ENCODE measurements at regions of chr1 and their contacts with region 1.

Region 1: GRCh38 chr1:241531195-241532161 is 700 bp upstream of the KMO start:
- DNase-seq: no peak
- H3K4me3 Mint-ChIP-seq: peak overlapping the region; percentile 85
- H3K27ac Mint-ChIP-seq: peak overlapping the region; percentile 92
- H3K4me1 Mint-ChIP-seq: peaks cover 15% of the 10 kb centered on the region
- H3K27me3 Mint-ChIP-seq: no peaks in the 10 kb centered on the region

Region 2: DNA sequence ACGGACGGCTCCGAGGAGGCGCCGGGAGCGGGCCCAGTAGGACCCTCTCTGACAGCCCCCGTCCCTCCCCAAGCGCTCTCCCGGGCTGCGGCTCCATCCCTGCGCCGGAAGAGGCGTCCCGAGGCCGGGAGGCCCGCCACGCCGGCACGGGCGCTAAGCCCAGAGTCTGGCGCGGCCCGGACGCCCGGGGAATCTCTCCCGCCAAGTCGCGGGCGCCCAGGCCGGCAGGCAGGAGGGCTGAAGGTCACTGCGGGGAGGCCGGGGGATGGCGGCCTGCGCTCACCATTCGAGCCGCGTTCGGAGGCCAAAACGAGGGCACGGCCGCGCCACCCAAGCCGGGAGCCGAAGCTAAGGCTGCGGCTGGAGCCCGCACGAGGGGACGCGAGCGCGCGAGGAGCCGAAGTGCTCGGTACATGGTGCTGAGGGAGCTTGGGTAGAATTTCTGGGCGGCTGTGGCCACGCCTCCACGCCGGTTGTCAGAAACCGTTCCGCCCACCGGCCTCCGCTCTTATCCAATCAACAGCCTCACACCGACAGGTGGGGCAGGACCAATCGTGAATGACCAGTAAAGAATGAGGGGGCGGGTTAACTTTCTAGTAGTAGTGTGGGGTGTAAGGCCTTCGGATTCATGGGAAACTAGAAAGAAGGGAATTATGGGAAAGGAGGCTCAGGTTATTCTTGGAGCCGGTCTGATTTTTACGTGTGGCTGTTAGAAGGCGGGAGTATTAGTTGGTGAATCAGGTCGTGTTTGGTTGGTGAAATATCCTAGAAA is 12.0 kb before region 1 on chr1 and contains the start of gene FH:
- CTCF ChIA-PET with region 1: no interaction called
- intact Hi-C with region 1: loop called (anchors 1 kb)
- DNase-seq: peak; percentile 97
- H3K4me3 Mint-ChIP-seq: peak within 1 kb of the TSS; percentile 89
- H3K27ac Mint-ChIP-seq: peak within 1 kb of the TSS; percentile 77
- H3K4me1 Mint-ChIP-seq: peaks cover 11% of the 10 kb centered on the region
- H3K27me3 Mint-ChIP-seq: peaks cover 11% of the 10 kb centered on the region
- total RNA-seq, gene FH: 91.6 to 95.4 TPM

Region 3: GRCh38 chr1:241592273-241592958 is 60.9 kb after region 1 on chr1:
- CTCF ChIA-PET with region 1: no interaction called
- intact Hi-C with region 1: loop called (anchors 1 kb)
- DNase-seq: peak; percentile 7
- H3K4me3 Mint-ChIP-seq: no peak overlapping the region
- H3K27ac Mint-ChIP-seq: peak overlapping the region; percentile 79
- H3K4me1 Mint-ChIP-seq: peaks cover 29% of the 10 kb centered on the region
- H3K27me3 Mint-ChIP-seq: no peaks in the 10 kb centered on the region

Region 4: GRCh38 chr1:241677201-241677600 is 145.7 kb after region 1 on chr1:
- CTCF ChIA-PET with region 1: interaction called, 3 read pairs
- intact Hi-C with region 1: loop called (anchors 1 kb)
- DNase-seq: peak; percentile 36
- H3K4me3 Mint-ChIP-seq: peak overlapping the region; percentile 4
- H3K27ac Mint-ChIP-seq: peak overlapping the region; percentile 37
- H3K4me1 Mint-ChIP-seq: peaks cover 46% of the 10 kb centered on the region
- H3K27me3 Mint-ChIP-seq: no peaks in the 10 kb centered on the region

Region 5: DNA sequence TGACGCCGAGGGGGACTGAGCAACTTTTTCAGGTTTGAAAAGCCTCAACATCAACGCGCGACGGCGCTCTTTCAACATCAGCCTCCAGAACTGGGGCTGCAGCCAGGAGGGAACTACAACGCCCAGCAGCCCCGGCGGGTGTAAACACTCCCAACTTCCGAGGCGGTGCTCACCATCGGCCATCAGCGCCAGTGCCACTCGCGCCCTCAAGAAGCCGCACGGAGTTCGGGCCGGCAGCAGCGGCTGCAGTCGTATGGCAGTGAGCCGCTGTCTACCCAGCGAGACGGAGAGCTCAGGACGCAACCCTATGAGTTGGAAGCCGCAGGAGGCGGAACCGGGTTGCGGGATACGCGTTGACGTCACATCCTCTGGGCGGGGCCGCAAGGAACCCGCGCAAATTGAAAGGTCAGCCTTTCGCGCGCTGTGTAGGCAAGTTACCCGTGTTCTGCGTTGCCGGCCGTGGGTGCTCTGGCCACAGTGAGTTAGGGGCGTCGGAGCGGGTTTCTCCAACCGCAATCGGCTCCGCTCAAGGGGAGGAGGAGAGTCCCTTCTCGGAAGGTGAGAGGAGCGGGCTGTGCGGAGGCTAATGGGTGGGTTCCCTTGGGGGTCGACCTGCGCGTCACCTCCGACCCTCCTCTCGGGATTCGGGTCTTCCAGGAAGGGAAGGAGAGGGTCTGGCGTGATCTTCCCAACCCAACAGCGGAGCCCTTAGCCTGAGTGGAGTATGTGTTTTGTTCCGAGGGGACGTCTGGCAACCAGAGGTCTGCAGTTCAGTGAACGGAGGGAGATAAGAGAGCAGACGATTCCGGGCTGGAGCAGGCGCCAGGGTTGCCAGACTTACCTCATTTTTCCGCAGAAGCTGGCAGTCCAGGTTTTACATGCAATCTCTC is 316.6 kb after region 1 on chr1 and contains the start of gene EXO1:
- CTCF ChIA-PET with region 1: no interaction called
- intact Hi-C with region 1: loop called (anchors 1 kb)
- DNase-seq: peak; percentile 93
- H3K4me3 Mint-ChIP-seq: peak within 1 kb of the TSS; percentile 98
- H3K27ac Mint-ChIP-seq: peak within 1 kb of the TSS; percentile 99
- H3K4me1 Mint-ChIP-seq: peaks cover 22% of the 10 kb centered on the region
- H3K27me3 Mint-ChIP-seq: peaks cover 1% of the 10 kb centered on the region
- total RNA-seq, gene EXO1: 55.3 to 59.6 TPM

Region 6: DNA sequence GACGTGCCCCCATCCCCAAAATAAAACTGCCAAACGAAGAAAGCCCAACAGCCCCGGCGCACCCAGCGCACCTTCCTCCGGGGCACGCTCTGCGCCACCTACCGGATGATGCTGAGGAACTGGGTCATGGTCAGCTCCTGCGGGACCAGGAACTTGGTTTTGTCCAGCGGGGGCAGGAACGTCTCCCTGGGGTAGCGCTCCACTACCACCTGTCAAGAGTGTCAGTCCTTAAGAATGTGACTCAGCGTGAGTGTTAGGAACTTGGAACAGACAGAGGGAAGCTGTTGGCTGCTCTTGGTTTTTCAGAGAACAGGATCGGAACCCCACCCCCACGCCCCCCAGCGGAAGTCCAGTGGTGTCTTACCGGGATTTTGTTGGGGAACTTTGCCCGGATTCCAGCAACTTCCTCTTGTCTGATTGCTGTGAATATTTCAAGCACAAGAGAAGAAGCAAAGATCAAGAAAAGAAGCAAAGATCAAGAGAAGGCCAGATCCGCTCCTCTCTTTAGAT is 467.0 kb after region 1 on chr1:
- CTCF ChIA-PET with region 1: interaction called, 5 read pairs
- intact Hi-C with region 1: loop called (anchors 1 kb)
- DNase-seq: peak; percentile 68
- H3K4me3 Mint-ChIP-seq: peak overlapping the region; percentile 54
- H3K27ac Mint-ChIP-seq: no peak overlapping the region
- H3K4me1 Mint-ChIP-seq: peaks cover 3% of the 10 kb centered on the region
- H3K27me3 Mint-ChIP-seq: peaks cover 1% of the 10 kb centered on the region

Region 7: DNA sequence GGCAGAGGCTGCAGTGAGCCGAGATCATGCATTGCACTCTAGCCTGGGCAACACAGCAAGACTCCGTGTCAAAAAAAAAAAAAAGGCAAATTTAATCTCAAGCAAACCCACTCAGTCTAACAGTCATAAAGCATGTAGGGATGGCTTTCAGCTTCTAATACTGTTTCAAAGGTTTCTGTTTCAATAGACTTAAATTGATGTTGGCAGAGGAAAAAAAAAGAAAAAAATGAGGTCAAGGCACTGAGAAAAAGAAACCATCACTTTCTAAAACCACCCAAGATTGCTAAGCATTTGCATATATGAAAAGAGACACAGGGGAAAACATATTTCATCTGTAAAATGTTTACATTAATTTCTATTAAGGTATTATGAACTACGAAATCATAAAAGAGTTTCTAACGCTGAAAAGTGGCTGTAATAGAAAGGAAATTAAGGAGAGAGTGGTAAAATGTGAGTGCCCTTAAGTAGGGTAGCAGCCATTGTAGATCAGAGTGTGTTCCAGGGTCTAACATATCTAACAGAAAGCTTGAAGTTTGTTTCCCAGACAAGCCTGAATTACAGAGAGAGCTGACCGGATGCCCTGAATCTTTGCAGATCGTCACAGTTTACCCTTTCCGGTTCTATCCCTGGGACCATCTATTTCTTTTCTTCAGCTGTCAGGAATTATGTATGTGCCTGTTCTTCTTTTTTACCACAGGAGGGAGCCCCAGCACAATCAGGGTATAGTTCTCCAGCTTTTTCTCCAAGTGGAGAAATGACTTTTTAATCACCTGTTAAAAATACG is 923.0 kb after region 1 on chr1:
- CTCF ChIA-PET with region 1: no interaction called
- intact Hi-C with region 1: loop called (anchors 5 kb)
- DNase-seq: peak; percentile 7
- H3K4me3 Mint-ChIP-seq: no peak overlapping the region
- H3K27ac Mint-ChIP-seq: no peak overlapping the region
- H3K4me1 Mint-ChIP-seq: no peaks in the 10 kb centered on the region
- H3K27me3 Mint-ChIP-seq: peaks cover 31% of the 10 kb centered on the region

Measured in activated naive CD4-positive, alpha-beta T cell treated with anti-CD3 and anti-CD28 coated beads for 36 hours (primary cell).